K562 (cell line): ENCODE measurements at regions of chr11 and their contacts with region 1.

Region 1: GRCh38 chr11:46489661-46490560 is 98.3 kb upstream of the CHRM4 start:
- DNase-seq: peak; percentile 30 to 69 (median 43)
- ATAC-seq: peak; percentile 98
- H3K4me3 ChIP-seq: no peak overlapping the region
- H3K27ac ChIP-seq: no peak overlapping the region
- H3K4me1 ChIP-seq: no peaks in the 10 kb centered on the region
- H3K27me3 ChIP-seq: no peaks in the 10 kb centered on the region
- CTCF ChIP-seq: peak; percentile 58 to 74 (median 70)
- EP300 ChIP-seq: no peak
- POLR2A ChIP-seq: no peak
- RAD21 ChIP-seq: peak; percentile 66 to 75

Region 2: GRCh38 chr11:46529095-46529905 is 39.4 kb after region 1 on chr11:
- CTCF ChIA-PET with region 1: interaction called, 6 read pairs
- POLR2A ChIA-PET with region 1: no interaction called
- in situ Hi-C with region 1: no loop called
- intact Hi-C with region 1: loop called (anchors 2 kb)
- DNase-seq: peak; percentile 81 to 90 (median 89)
- ATAC-seq: peak; percentile 95
- H3K4me3 ChIP-seq: no peak overlapping the region
- H3K27ac ChIP-seq: no peak overlapping the region
- H3K4me1 ChIP-seq: peaks cover 3 to 8% of the 10 kb centered on the region in 2 experiments; a peak in 4 of 5 replicates
- H3K27me3 ChIP-seq: no peaks in the 10 kb centered on the region
- CTCF ChIP-seq: peak; percentile 96 to 98 (median 96)
- EP300 ChIP-seq: no peak
- POLR2A ChIP-seq: no peak
- RAD21 ChIP-seq: peak; percentile 66 to 77

Region 3: GRCh38 chr11:47241841-47242301 is 752.0 kb after region 1 on chr11:
- CTCF ChIA-PET with region 1: no interaction called
- POLR2A ChIA-PET with region 1: no interaction called
- in situ Hi-C with region 1: no loop called
- intact Hi-C with region 1: no loop called
- DNase-seq: no peak
- ATAC-seq: no peak
- H3K4me3 ChIP-seq: no peak overlapping the region
- H3K27ac ChIP-seq: no peak overlapping the region
- H3K4me1 ChIP-seq: peaks cover 0 to 7% of the 10 kb centered on the region in 2 experiments; a peak in 1 of 5 replicates
- H3K27me3 ChIP-seq: no peaks in the 10 kb centered on the region
- CTCF ChIP-seq: no peak
- EP300 ChIP-seq: no peak
- POLR2A ChIP-seq: no peak
- RAD21 ChIP-seq: no peak